Breast epithelium (tissue), 4 donors: ENCODE measurements at regions of chr12 and their contacts with region 1.

Region 1: GRCh38 chr12:49233842-49234535 is 30.9 kb upstream of the TUBA1C start:
- DNase-seq: no peak
- H3K4me3 ChIP-seq: peak overlapping the region; percentile 49 to 68 (median 53)
- H3K27ac ChIP-seq: peak overlapping the region; percentile 85 to 94
- H3K4me1 ChIP-seq: no peaks in the 10 kb centered on the region
- H3K27me3 ChIP-seq: no peaks in the 10 kb centered on the region
- CTCF ChIP-seq: peak in 1 of 3 donors; percentile 63
- POLR2A ChIP-seq: no peak

Region 2: GRCh38 chr12:47648056-47648579 is 1585.9 kb before region 1 on chr12:
- intact Hi-C with region 1: no loop called
- DNase-seq: no peak
- H3K4me3 ChIP-seq: no peak overlapping the region
- H3K27ac ChIP-seq: no peak overlapping the region
- H3K4me1 ChIP-seq: no peaks in the 10 kb centered on the region
- H3K27me3 ChIP-seq: no peaks in the 10 kb centered on the region
- CTCF ChIP-seq: no peak
- POLR2A ChIP-seq: no peak

Region 3: DNA sequence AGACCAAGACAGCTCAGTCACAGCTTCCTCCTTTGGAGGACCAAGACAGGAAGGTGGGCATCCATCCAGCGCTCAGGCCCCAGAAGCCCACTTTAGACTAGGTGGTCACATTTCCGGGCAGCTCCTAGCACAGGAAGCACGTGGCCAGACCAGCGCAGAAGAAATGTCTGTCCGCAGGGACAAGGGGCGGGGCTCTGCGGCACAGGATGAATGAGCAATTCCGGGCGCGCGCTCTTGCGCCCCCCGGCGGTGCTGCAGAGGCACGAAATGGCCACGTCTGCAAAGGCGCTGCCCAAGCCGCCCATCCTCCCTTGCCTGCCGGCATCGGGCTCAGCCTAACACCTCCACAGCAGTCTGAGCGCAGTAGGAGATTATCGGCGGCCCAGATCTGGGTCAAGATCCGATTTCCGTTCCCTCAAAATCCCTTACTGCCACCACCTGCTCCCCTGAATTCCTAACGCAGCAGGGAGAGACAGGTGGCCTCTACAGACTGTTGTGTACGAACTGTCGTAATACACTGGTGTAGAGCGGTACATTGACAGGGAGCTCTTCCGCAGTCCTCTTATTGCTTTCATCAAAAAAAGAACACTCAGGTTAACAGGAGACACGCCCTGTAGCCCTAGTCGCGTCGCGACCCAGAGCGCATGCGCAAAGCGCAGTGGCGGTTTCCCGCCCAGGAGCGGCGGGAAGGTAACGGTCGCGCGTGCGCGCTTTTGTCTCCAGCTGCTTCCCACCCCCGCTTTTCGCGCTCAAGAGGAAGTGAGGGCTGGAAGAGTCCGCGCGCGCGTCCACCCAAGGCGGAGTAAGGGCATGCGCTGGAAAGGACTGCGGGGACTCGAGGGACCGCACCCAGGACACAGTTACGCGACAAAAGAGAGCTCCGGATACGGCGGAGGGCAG is 103.6 kb before region 1 on chr12:
- intact Hi-C with region 1: loop called (anchors 2 kb)
- DNase-seq: peak; percentile 85 to 89
- H3K4me3 ChIP-seq: peak overlapping the region; percentile 96 to 100 (median 97)
- H3K27ac ChIP-seq: peak overlapping the region; percentile 98 to 100
- H3K4me1 ChIP-seq: peaks cover 5 to 9% of the 10 kb centered on the region in 2 donors
- H3K27me3 ChIP-seq: no peaks in the 10 kb centered on the region
- CTCF ChIP-seq: peak; percentile 77 to 80 (median 79)
- POLR2A ChIP-seq: no peak